Upper lobe of right lung (tissue), 1 donor: ENCODE measurements at regions of chr1 and their contacts with region 1.

Region 1: GRCh38 chr1:2412519-2413233 is at the start of gene PEX10:
- DNase-seq: peak; percentile 100
- ATAC-seq: peak; percentile 96
- H3K4me3 ChIP-seq: peak within 1 kb of the TSS; percentile 95
- H3K27ac ChIP-seq: peak within 1 kb of the TSS; percentile 87
- H3K4me1 ChIP-seq: peaks cover 19% of the 10 kb centered on the region
- H3K27me3 ChIP-seq: peaks cover 4% of the 10 kb centered on the region
- CTCF ChIP-seq: no peak
- total RNA-seq, gene PEX10: 14.6 TPM

Region 2: GRCh38 chr1:2545759-2546514 is 133.3 kb after region 1 on chr1:
- intact Hi-C with region 1: loop called (anchors 10 kb)
- DNase-seq: peak; percentile 97
- ATAC-seq: peak; percentile 76
- H3K4me3 ChIP-seq: peak overlapping the region; percentile 85
- H3K27ac ChIP-seq: peak overlapping the region; percentile 97
- H3K4me1 ChIP-seq: peaks cover 42% of the 10 kb centered on the region
- H3K27me3 ChIP-seq: peaks cover 2% of the 10 kb centered on the region
- CTCF ChIP-seq: no peak

Region 3: GRCh38 chr1:2642560-2643413 is 230.1 kb after region 1 on chr1:
- intact Hi-C with region 1: loop called (anchors 10 kb)
- DNase-seq: peak; percentile 95
- ATAC-seq: peak; percentile 92
- H3K4me3 ChIP-seq: peak overlapping the region; percentile 99
- H3K27ac ChIP-seq: peak overlapping the region; percentile 89
- H3K4me1 ChIP-seq: peaks cover 11% of the 10 kb centered on the region
- H3K27me3 ChIP-seq: no peaks in the 10 kb centered on the region
- CTCF ChIP-seq: peak; percentile 25

Region 4: GRCh38 chr1:2789986-2790581 is 377.4 kb after region 1 on chr1:
- intact Hi-C with region 1: loop called (anchors 10 kb)
- DNase-seq: peak; percentile 51
- ATAC-seq: no peak
- H3K4me3 ChIP-seq: no peak overlapping the region
- H3K27ac ChIP-seq: no peak overlapping the region
- H3K4me1 ChIP-seq: no peaks in the 10 kb centered on the region
- H3K27me3 ChIP-seq: peaks cover 73% of the 10 kb centered on the region
- CTCF ChIP-seq: no peak